Activated CD8-positive, alpha-beta memory T cell treated with anti-CD3 and anti-CD28 coated beads, Interleukin-2, amount 10 ng/mL, durations not matched to agents 7 days and 5 days (primary cell): ENCODE measurements at regions of chr1 and their contacts with region 1.

Region 1: DNA sequence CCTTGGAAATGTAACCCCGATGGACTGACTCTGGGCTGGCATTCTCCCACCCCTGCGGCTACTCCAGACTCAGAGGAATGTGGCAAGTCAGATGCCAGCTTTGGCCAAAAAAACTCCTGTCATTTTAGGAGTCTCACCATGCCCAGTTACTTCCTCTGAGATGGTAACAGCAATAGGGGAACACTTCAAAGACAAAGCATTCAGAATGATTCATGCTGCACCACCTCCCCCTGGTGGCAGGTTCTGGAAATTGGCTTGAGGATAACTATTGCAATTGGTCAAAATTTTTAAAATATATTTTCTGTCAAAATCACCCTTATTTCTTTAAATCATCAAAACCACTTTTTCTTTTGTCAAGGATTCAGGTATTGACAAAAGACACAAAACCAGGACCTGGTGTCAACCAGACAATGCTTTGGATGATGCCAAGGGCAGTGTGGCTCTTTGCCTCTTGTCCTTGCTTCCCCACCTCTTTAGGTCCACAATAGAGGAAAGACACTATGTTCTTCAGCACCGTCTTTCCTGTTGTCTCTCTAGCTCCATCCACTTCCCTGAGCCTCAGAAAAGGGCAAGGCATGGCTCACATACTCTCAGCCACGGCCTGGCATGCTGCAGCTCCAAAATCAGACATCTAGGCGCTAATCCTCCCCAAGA is 9.9 kb upstream of the CDCA8 start:
- DNase-seq: peak; percentile 84
- ATAC-seq: peak; percentile 80
- H3K4me3 Mint-ChIP-seq: no peak overlapping the region
- H3K27ac Mint-ChIP-seq: peak overlapping the region; percentile 52
- H3K4me1 Mint-ChIP-seq: peaks cover 6% of the 10 kb centered on the region
- H3K27me3 Mint-ChIP-seq: no peaks in the 10 kb centered on the region

Region 2: DNA sequence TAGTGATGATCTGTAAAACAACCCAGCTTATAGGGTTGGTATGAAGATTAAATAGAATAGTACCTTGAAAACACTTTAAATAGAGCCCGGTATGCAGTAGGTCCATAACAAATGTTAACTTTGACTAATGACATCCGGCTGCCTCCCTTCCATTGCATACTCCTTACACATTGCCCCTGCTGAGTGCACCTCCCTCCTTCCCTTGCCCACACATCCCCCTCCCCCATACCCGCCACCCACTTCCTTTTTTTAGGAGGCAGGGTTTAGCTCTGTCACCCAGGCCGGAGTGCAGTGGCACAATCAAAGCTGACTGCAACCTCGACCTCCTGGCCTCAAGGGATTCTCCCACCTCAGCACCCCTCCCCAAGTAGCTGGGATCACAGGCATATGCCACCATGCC is 232.5 kb before region 1 on chr1:
- CTCF ChIA-PET with region 1: interaction called, 11 read pairs
- DNase-seq: peak; percentile 48
- ATAC-seq: no peak
- H3K4me3 Mint-ChIP-seq: no peak overlapping the region
- H3K27ac Mint-ChIP-seq: peak overlapping the region; percentile 15
- H3K4me1 Mint-ChIP-seq: peaks cover 13% of the 10 kb centered on the region
- H3K27me3 Mint-ChIP-seq: peaks cover 14% of the 10 kb centered on the region

Region 3: GRCh38 chr1:37561133-37562132 is 121.0 kb before region 1 on chr1:
- CTCF ChIA-PET with region 1: interaction called, 13 read pairs
- DNase-seq: peak; percentile 62
- ATAC-seq: peak; percentile 76
- H3K4me3 Mint-ChIP-seq: no peak overlapping the region
- H3K27ac Mint-ChIP-seq: no peak overlapping the region
- H3K4me1 Mint-ChIP-seq: peaks cover 2% of the 10 kb centered on the region
- H3K27me3 Mint-ChIP-seq: no peaks in the 10 kb centered on the region

Region 4: GRCh38 chr1:37602750-37603694 is 79.4 kb before region 1 on chr1:
- CTCF ChIA-PET with region 1: interaction called, 145 read pairs
- DNase-seq: peak; percentile 55
- ATAC-seq: peak; percentile 87
- H3K4me3 Mint-ChIP-seq: no peak overlapping the region
- H3K27ac Mint-ChIP-seq: no peak overlapping the region
- H3K4me1 Mint-ChIP-seq: peaks cover 2% of the 10 kb centered on the region
- H3K27me3 Mint-ChIP-seq: peaks cover 22% of the 10 kb centered on the region